Activated CD8-positive, alpha-beta T cell treated with anti-CD3 and anti-CD28 coated beads for 36 hours (primary cell): ENCODE measurements at regions of chr15 and their contacts with region 1.

Region 1: GRCh38 chr15:38554354-38554753 is 10.3 kb downstream of the RASGRP1 start:
- DNase-seq: peak; percentile 67
- ATAC-seq: peak; percentile 73
- H3K4me3 Mint-ChIP-seq: peak overlapping the region; percentile 54
- H3K27ac Mint-ChIP-seq: peak overlapping the region; percentile 96
- H3K4me1 Mint-ChIP-seq: peaks cover 88% of the 10 kb centered on the region
- H3K27me3 Mint-ChIP-seq: no peaks in the 10 kb centered on the region
- CTCF ChIP-seq: no peak

Region 2: GRCh38 chr15:38490242-38490922 is 64.0 kb before region 1 on chr15:
- CTCF ChIA-PET with region 1: no interaction called
- POLR2A ChIA-PET with region 1: interaction called, 6 read pairs
- intact Hi-C with region 1: loop called (anchors 5 kb)
- DNase-seq: no peak
- ATAC-seq: no peak
- H3K4me3 Mint-ChIP-seq: no peak overlapping the region
- H3K27ac Mint-ChIP-seq: peak overlapping the region; percentile 78
- H3K4me1 Mint-ChIP-seq: peaks cover 56% of the 10 kb centered on the region
- H3K27me3 Mint-ChIP-seq: no peaks in the 10 kb centered on the region
- CTCF ChIP-seq: no peak

Region 3: DNA sequence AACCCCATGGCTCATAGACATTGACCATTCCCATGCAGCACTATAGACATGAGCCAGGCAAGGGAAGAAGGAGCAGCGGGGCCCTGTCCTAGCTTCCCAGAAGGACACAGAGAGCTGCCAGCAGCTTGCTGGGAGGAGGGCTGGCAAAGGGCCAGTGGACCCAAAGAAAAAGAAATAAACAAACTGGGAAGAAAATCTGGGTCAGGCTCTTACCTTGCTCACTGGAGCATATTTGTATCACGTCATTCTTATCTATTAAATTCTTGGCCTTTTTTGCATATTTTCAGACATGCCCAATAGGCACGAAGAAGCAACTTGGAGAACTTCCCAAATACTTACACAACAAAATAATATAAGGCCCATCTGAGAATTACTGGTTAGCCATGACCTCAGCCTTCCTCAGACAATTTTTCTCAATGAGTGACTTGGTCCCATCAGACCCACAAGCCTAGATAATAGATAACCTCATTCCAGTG is 18.1 kb before region 1 on chr15:
- CTCF ChIA-PET with region 1: interaction called, 5 read pairs
- POLR2A ChIA-PET with region 1: interaction called, 17 read pairs
- intact Hi-C with region 1: loop called (anchors 2 kb)
- DNase-seq: no peak
- ATAC-seq: no peak
- H3K4me3 Mint-ChIP-seq: no peak overlapping the region
- H3K27ac Mint-ChIP-seq: peak overlapping the region; percentile 97
- H3K4me1 Mint-ChIP-seq: peaks cover 98% of the 10 kb centered on the region
- H3K27me3 Mint-ChIP-seq: no peaks in the 10 kb centered on the region
- CTCF ChIP-seq: no peak